PC-9 (cell line): ENCODE measurements at regions of chr5 and their contacts with region 1.

Region 1: DNA sequence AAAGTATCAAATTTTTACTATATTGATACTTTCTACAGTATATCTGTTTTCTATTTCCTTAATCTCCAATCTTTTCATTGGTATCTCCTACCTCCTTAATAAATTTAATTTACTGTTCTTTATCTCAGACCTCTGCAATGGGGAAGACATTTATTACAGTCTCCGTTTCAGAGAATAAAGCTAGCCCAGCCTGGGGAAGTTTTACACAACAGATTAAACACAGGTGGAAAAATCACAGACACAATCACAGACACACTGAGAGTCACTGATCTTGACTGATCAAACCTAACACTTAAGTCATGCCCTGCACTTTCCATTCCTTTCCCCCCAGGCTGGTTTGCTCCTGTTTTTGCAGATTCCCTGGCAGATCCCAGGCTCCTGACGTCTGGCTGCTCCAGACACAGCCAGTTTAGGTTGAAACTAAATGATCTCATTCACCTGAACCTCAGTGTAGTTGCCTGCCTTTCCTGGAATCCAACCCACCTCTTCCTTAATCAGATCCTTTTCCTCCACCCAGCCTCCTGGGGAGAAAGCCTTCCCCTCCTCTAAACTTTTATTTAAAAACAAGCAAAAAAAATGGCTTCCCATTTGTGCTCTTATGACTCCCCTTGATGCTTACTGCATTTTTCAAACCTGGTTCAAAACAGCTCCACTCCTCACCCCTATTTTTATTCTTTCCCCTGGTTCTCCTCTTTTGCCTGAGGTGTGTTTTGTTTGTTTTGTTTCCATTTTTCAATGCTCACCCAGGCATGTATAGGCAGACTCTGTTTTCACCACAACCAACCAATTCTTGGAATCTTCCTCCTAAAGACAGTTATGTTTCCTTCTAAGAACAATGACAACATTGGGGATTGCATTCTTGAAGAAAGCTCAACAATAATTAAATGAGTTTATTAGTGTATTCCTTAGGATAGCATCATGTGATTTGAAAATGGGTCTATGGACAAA is 29.5 kb upstream of the OSMR start:
- DNase-seq: no peak
- H3K4me3 ChIP-seq: no peak overlapping the region
- H3K27ac ChIP-seq: no peak overlapping the region
- H3K4me1 ChIP-seq: no peaks in the 10 kb centered on the region
- H3K27me3 ChIP-seq: no peaks in the 10 kb centered on the region
- CTCF ChIP-seq: no peak

Region 2: GRCh38 chr5:38598994-38599611 is 217.3 kb before region 1 on chr5:
- CTCF ChIA-PET with region 1: no interaction called
- POLR2A ChIA-PET with region 1: no interaction called
- intact Hi-C with region 1: no loop called
- DNase-seq: peak; percentile 60 to 80
- H3K4me3 ChIP-seq: no peak overlapping the region
- H3K27ac ChIP-seq: peak overlapping the region; percentile 38
- H3K4me1 ChIP-seq: peaks cover 76% of the 10 kb centered on the region
- H3K27me3 ChIP-seq: no peaks in the 10 kb centered on the region
- CTCF ChIP-seq: no peak

Region 3: GRCh38 chr5:38666668-38667498 is 149.5 kb before region 1 on chr5:
- CTCF ChIA-PET with region 1: no interaction called
- POLR2A ChIA-PET with region 1: no interaction called
- intact Hi-C with region 1: no loop called
- DNase-seq: peak in 1 of 2 experiments; percentile 52
- H3K4me3 ChIP-seq: no peak overlapping the region
- H3K27ac ChIP-seq: no peak overlapping the region
- H3K4me1 ChIP-seq: no peaks in the 10 kb centered on the region
- H3K27me3 ChIP-seq: no peaks in the 10 kb centered on the region
- CTCF ChIP-seq: peak; percentile 79

Region 4: GRCh38 chr5:38831909-38832308 is 15.6 kb after region 1 on chr5:
- CTCF ChIA-PET with region 1: interaction called, 11 read pairs
- POLR2A ChIA-PET with region 1: no interaction called
- intact Hi-C with region 1: no loop called
- DNase-seq: no peak
- H3K4me3 ChIP-seq: no peak overlapping the region
- H3K27ac ChIP-seq: no peak overlapping the region
- H3K4me1 ChIP-seq: peaks cover 18% of the 10 kb centered on the region
- H3K27me3 ChIP-seq: no peaks in the 10 kb centered on the region
- CTCF ChIP-seq: peak; percentile 75